ENCODE measurements at regions of chr15 and their contacts with region 1.

Region 1: DNA sequence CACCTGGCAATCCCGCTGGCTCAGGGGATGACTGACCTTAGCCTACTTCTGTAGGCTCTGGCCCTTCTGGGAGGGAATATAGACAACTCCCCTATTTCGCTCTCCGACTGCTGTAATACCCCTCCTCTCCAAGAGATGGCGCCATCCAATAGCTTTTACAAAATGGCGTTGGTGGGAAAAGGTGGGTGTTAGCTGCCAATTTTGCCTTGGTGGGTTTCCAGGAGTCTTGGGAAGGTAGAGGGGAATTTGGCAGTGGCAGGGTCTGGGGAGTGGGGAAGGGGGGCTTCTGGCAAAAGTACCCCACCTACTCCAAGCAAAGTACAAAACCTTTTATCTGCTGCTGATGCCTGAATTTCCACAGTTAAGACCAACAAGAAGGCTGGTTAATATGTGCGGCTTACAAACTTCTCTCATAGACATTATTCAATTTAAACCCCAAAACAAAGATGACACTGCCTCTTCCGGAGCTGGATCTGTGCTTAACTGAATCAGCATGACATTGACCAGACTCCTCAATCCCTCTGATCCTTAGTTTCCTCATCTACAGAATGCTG is 62.1 kb downstream of the RASGRF1 start:
- DNase-seq: peak in 1 of 9 donors; percentile 41
- ATAC-seq: no peak
- H3K4me3 ChIP-seq: no peak overlapping the region
- H3K4me3 Mint-ChIP-seq: no peak overlapping the region
- H3K27ac ChIP-seq: no peak overlapping the region
- H3K27ac Mint-ChIP-seq: no peak overlapping the region
- H3K4me1 ChIP-seq: no peaks in the 10 kb centered on the region
- H3K4me1 Mint-ChIP-seq: peaks cover 0 to 1% (median 0%) of the 10 kb centered on the region in 7 donors
- H3K27me3 ChIP-seq: no peaks in the 10 kb centered on the region
- H3K27me3 Mint-ChIP-seq: peaks cover 0 to 26% (median 4%) of the 10 kb centered on the region in 5 donors

Region 2: DNA sequence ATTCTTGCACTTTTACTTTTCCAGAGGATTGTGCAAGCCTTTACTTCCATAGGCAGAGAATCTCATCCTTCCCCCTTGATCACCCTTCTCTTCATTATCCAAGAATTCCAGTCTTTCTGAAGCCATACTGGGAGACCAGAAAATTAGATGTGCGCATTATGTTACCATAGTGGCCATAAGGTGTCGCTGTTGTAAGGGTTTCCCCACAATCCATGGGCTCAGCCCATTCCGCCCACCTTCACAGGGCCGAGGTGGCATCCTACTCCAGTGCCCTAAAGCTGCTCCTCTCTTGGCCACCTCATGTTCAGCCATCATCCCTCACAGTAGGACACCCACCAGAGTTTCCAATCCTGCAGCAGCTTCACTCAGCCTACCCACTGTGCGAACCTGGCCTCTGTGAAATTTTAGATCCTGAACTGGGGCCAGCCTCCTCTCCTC is 118.7 kb before region 1 on chr15:
- CTCF ChIA-PET with region 1: no interaction called
- POLR2A ChIA-PET with region 1: no interaction called
- intact Hi-C with region 1: loop called in 1 of 2 experiments (anchors 5 kb)
- DNase-seq: peak in 2 of 9 donors; percentile 19 to 23
- ATAC-seq: peak; percentile 65
- H3K4me3 ChIP-seq: no peak overlapping the region
- H3K4me3 Mint-ChIP-seq: no peak overlapping the region
- H3K27ac ChIP-seq: no peak overlapping the region
- H3K27ac Mint-ChIP-seq: peak overlapping the region in 6 of 9 donors; percentile 1 to 68 (median 39)
- H3K4me1 ChIP-seq: no peaks in the 10 kb centered on the region
- H3K4me1 Mint-ChIP-seq: peaks cover 5 to 41% (median 26%) of the 10 kb centered on the region in 7 donors
- H3K27me3 ChIP-seq: no peaks in the 10 kb centered on the region
- H3K27me3 Mint-ChIP-seq: no peaks in the 10 kb centered on the region

Region 3: DNA sequence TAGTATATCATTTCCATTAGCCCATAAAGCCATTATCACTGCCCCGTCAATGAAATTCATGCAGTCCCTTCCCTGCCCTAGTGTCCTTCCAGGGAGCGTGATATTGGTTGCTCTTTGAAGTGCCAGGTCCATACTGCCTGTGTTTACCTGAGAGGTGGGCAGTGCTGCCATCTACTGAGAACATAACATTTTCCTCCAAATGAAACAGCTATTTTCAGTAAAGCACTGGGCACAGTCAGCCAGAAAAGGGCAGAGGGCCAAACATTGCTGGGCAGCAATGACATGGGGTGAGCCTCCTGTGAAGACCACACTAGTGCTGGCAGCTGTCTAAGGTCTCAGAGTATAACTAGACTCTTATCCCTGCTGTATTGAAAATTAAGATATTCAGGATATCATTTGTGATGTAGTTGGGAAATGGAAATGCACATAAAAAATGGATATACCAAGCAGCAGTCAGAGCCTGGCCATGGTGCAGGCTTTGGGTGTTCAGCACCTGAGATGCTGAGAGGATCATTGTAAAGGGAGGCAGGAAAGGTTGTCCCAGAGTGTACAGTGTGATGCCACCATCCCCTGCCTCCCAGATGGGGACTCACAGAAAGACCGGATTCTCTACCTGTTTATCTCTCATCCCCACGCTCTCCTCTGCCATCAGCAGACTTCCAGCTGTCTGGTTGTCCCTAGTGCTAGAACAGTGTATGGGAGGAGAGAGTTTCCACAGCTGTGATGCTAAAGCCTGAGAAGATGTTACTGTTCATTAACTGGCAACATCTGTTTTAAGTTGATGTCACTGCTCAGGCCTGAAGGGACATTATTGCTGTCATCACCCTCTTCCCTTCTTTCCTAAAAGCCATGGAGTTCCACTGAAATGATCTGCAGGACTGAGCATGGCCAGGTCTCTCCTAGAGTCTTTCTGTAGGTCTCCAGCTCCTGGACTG is 1484.5 kb after region 1 on chr15:
- CTCF ChIA-PET with region 1: no interaction called
- POLR2A ChIA-PET with region 1: no interaction called
- intact Hi-C with region 1: no loop called
- DNase-seq: no peak
- ATAC-seq: no peak
- H3K4me3 ChIP-seq: no peak overlapping the region
- H3K4me3 Mint-ChIP-seq: no peak overlapping the region
- H3K27ac ChIP-seq: no peak overlapping the region
- H3K27ac Mint-ChIP-seq: no peak overlapping the region
- H3K4me1 ChIP-seq: no peaks in the 10 kb centered on the region
- H3K4me1 Mint-ChIP-seq: no peaks in the 10 kb centered on the region
- H3K27me3 ChIP-seq: peaks cover 0 to 2% of the 10 kb centered on the region in 2 donors
- H3K27me3 Mint-ChIP-seq: peaks cover 0 to 8% (median 6%) of the 10 kb centered on the region in 5 donors